Tibial artery (tissue), 4 donors: ENCODE measurements at regions of chr10 and their contacts with region 1.

Region 1: GRCh38 chr10:132536971-132537712 is 445 bp upstream of the INPP5A start:
- DNase-seq: peak; percentile 100
- H3K4me3 ChIP-seq: peak overlapping the region; percentile 69 to 84
- H3K27ac ChIP-seq: peak overlapping the region; percentile 82 to 84
- H3K4me1 ChIP-seq: peaks cover 0 to 53% (median 47%) of the 10 kb centered on the region in 4 donors
- H3K27me3 ChIP-seq: no peaks in the 10 kb centered on the region
- CTCF ChIP-seq: peak in 1 of 2 experiments; percentile 53

Region 2: GRCh38 chr10:132382231-132382922 is 154.8 kb before region 1 on chr10:
- intact Hi-C with region 1: loop called (anchors 5 kb)
- DNase-seq: peak in 1 of 2 donors; percentile 17
- H3K4me3 ChIP-seq: no peak overlapping the region
- H3K27ac ChIP-seq: no peak overlapping the region
- H3K4me1 ChIP-seq: no peaks in the 10 kb centered on the region
- H3K27me3 ChIP-seq: no peaks in the 10 kb centered on the region
- CTCF ChIP-seq: no peak

Region 3: GRCh38 chr10:132516771-132517725 is 20.1 kb before region 1 on chr10:
- intact Hi-C with region 1: loop called (anchors 2 kb)
- DNase-seq: peak; percentile 94 to 99
- H3K4me3 ChIP-seq: peak overlapping the region; percentile 15 to 38
- H3K27ac ChIP-seq: peak overlapping the region; percentile 88 to 89
- H3K4me1 ChIP-seq: peaks cover 33 to 68% (median 57%) of the 10 kb centered on the region in 4 donors
- H3K27me3 ChIP-seq: no peaks in the 10 kb centered on the region
- CTCF ChIP-seq: no peak

Region 4: DNA sequence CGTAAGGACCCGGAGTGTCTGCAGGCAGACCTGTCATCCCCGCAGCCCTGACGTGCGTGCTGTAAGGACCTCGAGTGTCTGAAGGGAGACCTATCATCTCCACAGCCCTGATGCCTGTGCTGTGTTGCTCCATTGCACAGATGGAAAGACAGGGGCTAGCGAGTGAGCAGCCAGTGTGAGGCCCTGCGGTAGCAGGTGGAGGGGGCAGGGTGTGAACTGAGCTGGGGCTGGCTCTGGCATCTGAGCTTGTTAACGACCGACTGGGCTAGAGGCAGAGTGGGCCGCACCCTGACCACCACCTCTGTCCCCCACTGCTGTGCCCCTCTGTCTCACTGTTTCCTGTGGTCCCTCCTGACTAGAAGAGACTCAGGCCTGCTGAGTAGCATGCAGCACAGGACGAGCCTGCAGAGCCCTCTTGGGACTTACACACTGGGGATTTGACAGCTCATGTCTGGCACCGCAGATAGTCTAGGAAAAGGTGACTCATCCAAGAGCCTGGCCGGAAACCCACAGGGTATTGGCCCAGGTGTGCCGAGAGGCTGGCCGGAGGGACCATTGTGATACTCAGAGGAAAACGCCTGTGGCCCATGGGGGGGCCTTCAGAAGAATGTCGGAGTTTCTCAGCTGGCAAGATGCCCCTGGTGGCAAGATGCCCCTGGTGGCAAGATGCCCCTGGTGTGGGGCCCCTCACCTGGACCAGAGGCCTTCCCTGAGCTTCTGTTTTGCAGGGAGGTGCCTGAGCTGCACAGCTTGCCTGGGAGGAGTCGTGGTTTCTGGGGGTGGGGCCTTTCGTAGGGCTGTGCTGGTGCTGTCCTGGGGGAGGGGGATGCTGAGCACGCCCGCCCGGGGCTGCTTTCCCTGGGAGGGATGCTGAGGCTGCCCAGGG is 34.8 kb after region 1 on chr10:
- intact Hi-C with region 1: loop called (anchors 5 kb)
- DNase-seq: peak in 1 of 2 donors; percentile 84
- H3K4me3 ChIP-seq: peak overlapping the region in 1 of 2 donors; percentile 2
- H3K27ac ChIP-seq: peak overlapping the region; percentile 67 to 68
- H3K4me1 ChIP-seq: peaks cover 15 to 60% (median 46%) of the 10 kb centered on the region in 4 donors
- H3K27me3 ChIP-seq: no peaks in the 10 kb centered on the region
- CTCF ChIP-seq: no peak

Region 5: GRCh38 chr10:132637477-132638129 is 100.5 kb after region 1 on chr10:
- intact Hi-C with region 1: loop called (anchors 5 kb)
- DNase-seq: no peak
- H3K4me3 ChIP-seq: peak overlapping the region; percentile 0 to 1
- H3K27ac ChIP-seq: peak overlapping the region in 1 of 2 donors; percentile 41
- H3K4me1 ChIP-seq: peaks cover 0 to 69% (median 34%) of the 10 kb centered on the region in 4 donors
- H3K27me3 ChIP-seq: no peaks in the 10 kb centered on the region
- CTCF ChIP-seq: peak; percentile 72 to 76